Dorsolateral prefrontal cortex (tissue), 120 donors: ENCODE measurements at regions of chr7 and their contacts with region 1.

Region 1: DNA sequence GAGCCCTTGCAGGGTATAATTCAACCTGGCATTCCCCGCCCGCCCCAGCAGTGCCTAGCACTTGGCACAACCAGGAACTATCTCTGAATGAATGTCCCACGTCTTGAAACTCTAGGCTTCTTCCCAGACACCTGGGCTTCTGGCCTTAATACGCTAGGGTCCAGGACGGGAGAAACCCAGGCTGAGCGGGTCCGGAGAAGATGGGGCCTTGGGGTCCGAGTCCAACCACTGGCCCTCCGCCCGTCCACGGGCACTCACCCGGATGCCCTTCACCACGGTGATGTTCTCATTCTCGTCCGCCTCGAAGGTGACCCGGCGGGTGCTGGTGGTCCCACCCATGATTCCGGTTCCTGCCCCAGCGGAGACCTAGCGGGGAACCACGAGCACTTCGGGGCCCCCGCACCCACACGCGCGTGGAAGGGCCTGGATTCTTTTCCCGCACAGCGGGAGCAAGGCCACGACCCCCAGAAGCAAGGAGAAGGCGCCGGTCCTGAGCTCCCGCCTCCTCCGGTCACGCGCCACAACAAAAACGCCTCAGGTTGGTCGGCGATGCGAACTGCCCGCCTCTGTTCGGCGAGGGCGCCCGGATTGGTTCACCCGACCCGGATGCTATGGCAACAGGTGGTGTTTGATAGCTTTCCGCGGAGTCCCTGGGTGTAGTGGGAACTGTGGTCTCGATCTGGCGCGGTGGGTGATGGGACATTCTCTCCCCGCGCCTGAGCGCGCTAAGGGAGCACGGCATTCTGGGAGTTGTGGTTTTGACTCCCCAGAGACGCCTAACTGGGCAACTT is at the start of gene CHCHD3:
- DNase-seq: peak; percentile 99 to 100 (median 99)
- H3K4me3 ChIP-seq: peak within 1 kb of the TSS; percentile 75 to 99 (median 92)
- H3K27ac ChIP-seq: peak within 1 kb of the TSS in 55 of 59 donors; percentile 11 to 90 (median 74)
- H3K27me3 ChIP-seq: no peaks in the 10 kb centered on the region
- CTCF ChIP-seq: peak in 39 of 56 donors; percentile 3 to 59 (median 32)
- total RNA-seq, gene CHCHD3: 31.7 to 62.9 (median 44.8) TPM

Region 2: DNA sequence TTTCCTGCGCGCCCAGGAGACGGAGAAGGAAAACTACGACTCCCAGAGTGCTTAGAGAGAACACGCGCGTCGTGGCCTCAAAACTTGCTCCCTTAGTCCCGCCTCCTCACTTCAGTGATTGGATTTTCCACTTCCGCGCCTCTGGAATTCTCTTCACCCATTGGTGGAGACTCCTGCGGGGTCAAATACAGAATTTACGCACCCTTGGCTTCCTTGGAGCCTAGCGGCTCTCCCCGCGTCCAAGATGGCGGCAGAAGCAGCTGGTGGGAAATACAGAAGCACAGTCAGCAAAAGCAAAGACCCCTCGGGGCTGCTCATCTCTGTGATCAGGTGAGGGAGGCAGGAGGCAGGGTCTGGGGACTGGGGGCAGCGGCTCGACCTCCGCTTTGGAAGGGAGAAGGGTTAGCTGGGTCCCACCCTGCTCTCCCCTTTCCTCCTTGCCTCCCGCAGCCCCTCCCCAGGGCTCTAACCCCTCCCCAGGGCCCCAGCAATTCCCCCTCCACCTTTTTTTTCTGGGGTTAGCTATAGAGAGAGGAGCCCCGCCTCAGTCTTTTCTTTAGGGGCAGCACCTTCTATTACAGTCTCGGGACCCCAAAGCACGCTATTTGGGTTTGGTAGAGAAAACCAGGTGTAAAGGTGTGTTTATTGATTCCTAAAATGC is 171.2 kb after region 1 on chr7 and contains the start of gene EXOC4:
- intact Hi-C with region 1: loop called (anchors 5 kb)
- DNase-seq: peak; percentile 75 to 97 (median 95)
- H3K4me3 ChIP-seq: peak within 1 kb of the TSS; percentile 53 to 100 (median 89)
- H3K27ac ChIP-seq: peak within 1 kb of the TSS in 54 of 59 donors; percentile 39 to 96 (median 80)
- H3K27me3 ChIP-seq: no peaks in the 10 kb centered on the region
- CTCF ChIP-seq: peak in 30 of 56 donors; percentile 10 to 54 (median 26)
- total RNA-seq, gene EXOC4: 57.4 to 138 (median 104) TPM

Region 3: GRCh38 chr7:134126966-134127848 is 1045.4 kb after region 1 on chr7 and contains the start of gene LRGUK:
- intact Hi-C with region 1: loop called in 1 of 2 experiments (anchors 5 kb)
- DNase-seq: peak; percentile 69 to 91 (median 88)
- H3K4me3 ChIP-seq: peak within 1 kb of the TSS; percentile 41 to 91 (median 76)
- H3K27ac ChIP-seq: peak within 1 kb of the TSS in 5 of 59 donors; percentile 16 to 60 (median 28)
- H3K27me3 ChIP-seq: no peaks in the 10 kb centered on the region
- CTCF ChIP-seq: peak in 29 of 56 donors; percentile 5 to 53 (median 24)
- total RNA-seq, gene LRGUK: 0.53 to 4.5 (median 2.1) TPM